IMR-90 (cell line): ENCODE measurements at regions of chr19 and their contacts with region 1.

Region 1: DNA sequence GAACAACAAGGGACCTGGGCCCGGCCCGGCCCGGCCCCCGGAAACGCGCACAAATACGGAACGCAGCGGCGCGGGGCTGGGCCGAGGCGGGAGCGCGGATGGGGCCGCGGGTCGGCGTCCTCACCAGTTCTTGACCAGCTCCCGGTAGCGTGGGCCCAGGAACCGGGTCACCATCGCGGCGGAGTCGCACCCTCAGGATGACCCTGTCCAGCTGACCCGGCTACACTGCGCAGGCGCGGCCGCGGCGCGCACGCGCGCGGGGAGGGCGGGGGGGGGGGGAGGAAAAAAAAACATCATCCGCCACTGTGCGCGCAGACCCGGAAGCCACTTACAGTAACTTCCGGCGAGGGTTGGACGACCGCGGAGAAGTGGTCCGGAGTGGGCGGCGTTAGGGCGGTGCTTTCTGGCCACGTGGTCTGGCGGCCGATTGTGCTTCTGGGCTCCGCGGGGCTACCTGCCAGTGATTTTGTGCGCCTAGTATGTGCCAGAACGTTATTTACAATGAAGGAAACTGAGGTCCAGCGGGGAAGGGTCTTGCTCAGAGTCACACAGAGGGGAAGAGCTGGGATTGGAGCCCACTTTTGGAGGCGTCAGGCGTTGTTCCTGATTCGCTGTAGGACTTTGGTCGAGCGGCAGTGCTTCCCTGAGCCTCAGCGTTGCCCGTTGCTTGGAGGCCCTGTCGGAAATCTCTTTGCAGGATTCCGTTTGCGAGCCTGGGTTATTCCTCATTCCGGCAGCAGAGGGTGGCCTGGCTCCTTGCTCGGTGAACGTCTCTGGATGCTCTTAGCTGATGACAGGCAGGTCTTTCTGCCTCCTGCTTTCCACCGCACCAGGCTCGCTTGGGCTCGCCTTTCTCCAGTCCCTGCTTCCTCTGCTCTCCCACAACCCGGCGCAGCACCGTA is at the start of gene UQCR11:
- DNase-seq: peak; percentile 96
- ATAC-seq: peak; percentile 90
- H3K4me3 ChIP-seq: peak within 1 kb of the TSS; percentile 82
- H3K27ac ChIP-seq: peak within 1 kb of the TSS; percentile 89
- H3K4me1 ChIP-seq: peaks cover 2% of the 10 kb centered on the region; the same call in 1 of the 2 replicates
- H3K27me3 ChIP-seq: no peaks in the 10 kb centered on the region
- CTCF ChIP-seq: peak; percentile 67
- POLR2A ChIP-seq: no peak
- RAD21 ChIP-seq: peak; percentile 73
- total RNA-seq, gene UQCR11: 22.8 and 29.2 TPM in 2 replicates

Region 2: GRCh38 chr19:1592755-1593500 is 12.6 kb before region 1 on chr19 and contains the start of gene MBD3:
- CTCF ChIA-PET with region 1: no interaction called
- POLR2A ChIA-PET with region 1: interaction called, 12 read pairs
- dilution Hi-C with region 1: no loop called
- in situ Hi-C with region 1: no loop called
- intact Hi-C with region 1: no loop called
- DNase-seq: peak; percentile 93
- ATAC-seq: peak; percentile 89
- H3K4me3 ChIP-seq: peak within 1 kb of the TSS; percentile 61
- H3K27ac ChIP-seq: peak within 1 kb of the TSS; percentile 90
- H3K4me1 ChIP-seq: peaks cover 11% of the 10 kb centered on the region
- H3K27me3 ChIP-seq: no peaks in the 10 kb centered on the region
- CTCF ChIP-seq: no peak
- POLR2A ChIP-seq: no peak
- RAD21 ChIP-seq: no peak
- total RNA-seq, gene MBD3: 42.5 and 47.5 TPM in 2 replicates

Region 3: DNA sequence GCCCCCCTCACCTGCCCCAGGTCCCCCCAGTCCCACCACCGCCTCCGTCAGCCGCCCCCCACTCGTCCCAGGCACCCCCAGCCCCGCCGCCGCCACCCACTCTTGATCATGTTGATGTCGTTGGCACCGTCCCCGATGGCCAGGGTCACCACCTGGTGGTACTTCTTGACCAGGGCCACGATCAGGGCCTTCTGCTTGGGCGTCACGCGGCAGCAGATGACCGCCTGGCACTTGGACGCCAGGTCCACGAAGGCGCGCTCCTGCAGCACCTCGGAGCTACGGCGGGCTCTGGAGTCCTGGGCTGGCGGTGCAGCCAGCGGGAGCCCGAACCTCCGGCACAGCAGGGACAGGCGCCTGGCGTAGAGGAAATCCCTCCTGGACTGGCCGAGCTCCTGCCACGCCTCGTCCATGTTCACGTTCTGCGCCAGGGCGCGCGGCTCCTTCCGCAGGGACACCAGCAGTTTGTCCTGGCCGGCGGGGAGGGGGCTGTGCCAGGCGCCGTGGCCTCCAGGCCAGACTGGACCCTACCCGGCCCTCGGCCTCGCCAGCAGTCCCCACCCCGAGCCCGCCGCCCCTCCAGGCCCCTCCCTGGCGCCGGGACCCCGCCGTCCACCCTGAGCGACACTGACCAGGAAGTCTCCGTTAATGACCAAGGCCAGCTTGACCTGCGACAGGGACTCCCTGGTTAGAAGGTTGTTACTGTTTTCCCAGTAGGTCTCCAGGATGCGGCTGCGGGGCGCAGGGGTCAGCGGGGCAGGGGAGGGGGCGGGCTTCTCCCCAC is 184.0 kb after region 1 on chr19:
- CTCF ChIA-PET with region 1: no interaction called
- POLR2A ChIA-PET with region 1: no interaction called
- dilution Hi-C with region 1: no loop called
- in situ Hi-C with region 1: no loop called
- intact Hi-C with region 1: loop called (anchors 10 kb)
- DNase-seq: no peak
- ATAC-seq: no peak
- H3K4me3 ChIP-seq: no peak overlapping the region
- H3K27ac ChIP-seq: no peak overlapping the region
- H3K4me1 ChIP-seq: no peaks in the 10 kb centered on the region
- H3K27me3 ChIP-seq: peaks cover 17% of the 10 kb centered on the region; the same call in 1 of the 2 replicates
- CTCF ChIP-seq: no peak
- POLR2A ChIP-seq: no peak
- RAD21 ChIP-seq: no peak